Natural killer cell (primary cell): ENCODE measurements at regions of chr18 and their contacts with region 1.

Region 1: DNA sequence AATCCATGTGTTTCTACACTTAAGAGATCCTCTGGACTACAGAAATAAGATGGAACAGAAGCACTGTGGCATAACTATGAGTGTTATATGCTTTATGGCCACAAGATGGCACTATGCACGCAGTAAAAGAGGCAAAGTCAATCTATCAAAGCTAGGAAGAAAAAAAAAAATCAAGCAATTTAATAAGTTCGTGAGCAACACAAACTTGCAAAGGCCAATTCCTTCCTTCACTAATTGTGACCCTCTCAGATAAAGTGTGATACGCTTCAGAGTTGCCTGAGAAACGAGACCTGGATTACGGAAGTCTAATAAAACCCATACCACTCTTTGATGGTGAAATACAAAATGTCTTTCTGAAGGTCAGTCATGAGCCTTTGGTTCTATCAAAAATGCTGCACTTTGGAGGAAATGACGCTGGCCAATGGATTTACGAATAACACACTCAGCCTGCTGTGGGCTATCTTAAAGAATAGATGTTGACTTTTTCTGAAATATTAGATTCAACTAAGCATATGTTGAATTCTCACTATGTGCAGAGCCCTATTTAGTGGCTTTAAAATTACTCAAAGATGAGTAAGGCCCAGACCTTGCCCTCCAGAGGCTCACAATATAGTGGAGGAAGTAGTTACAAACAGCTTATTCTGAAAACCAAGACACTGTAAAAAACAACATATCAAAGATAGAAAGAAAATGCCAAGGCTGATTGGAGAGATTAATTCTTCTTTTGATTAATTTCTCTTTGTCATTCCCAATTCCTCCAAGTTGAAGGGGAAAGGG is 35.5 kb upstream of the TTR start:
- DNase-seq: peak in 1 of 2 donors; percentile 77
- ATAC-seq: peak; percentile 77 to 89 (median 86)
- H3K4me3 ChIP-seq: no peak overlapping the region
- H3K4me3 Mint-ChIP-seq: no peak overlapping the region
- H3K27ac ChIP-seq: no peak overlapping the region
- H3K27ac Mint-ChIP-seq: no peak overlapping the region
- H3K4me1 ChIP-seq: no peaks in the 10 kb centered on the region
- H3K4me1 Mint-ChIP-seq: peaks cover 0 to 6% of the 10 kb centered on the region in 2 donors
- H3K27me3 ChIP-seq: no peaks in the 10 kb centered on the region
- H3K27me3 Mint-ChIP-seq: peaks cover 18 to 37% of the 10 kb centered on the region in 2 donors
- CTCF ChIP-seq: peak; percentile 96

Region 2: DNA sequence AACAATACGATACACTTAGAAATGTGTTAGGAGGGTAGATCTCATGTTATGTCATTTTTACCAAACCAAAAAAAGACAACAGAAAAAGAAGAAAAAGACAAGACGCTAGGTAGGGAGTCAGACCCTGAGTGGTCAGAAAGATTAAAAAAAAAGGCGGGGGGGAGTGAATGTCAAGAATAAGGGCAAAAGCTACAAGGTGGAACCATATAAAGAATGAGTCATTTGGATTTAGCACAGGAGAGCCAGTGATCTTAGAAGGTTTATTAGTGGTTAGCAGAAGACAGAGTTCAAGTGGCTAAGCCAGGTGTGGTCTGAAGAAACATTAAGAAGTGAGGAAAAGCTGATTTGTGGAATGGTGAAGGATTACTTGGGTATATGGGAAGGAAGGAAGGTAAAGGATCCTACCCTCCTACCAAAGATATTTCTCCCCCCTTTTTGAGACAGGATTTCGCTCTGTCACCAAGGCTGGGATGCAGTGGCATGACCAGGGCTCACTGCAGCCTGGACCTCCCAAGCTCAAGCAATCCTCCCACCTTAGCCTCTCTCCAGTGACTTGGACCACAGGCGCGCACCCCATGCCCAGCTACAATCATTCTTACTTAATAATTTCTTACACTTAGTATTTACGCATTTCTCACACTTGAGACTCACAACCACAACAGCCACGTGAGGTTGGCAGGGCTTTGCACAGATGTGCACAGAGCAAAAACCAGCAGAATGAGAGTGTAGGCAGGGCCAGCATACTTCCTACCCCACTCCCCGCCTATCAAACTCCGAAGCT is 456.5 kb before region 1 on chr18:
- intact Hi-C with region 1: no loop called
- DNase-seq: no peak
- ATAC-seq: no peak
- H3K4me3 ChIP-seq: no peak overlapping the region
- H3K4me3 Mint-ChIP-seq: no peak overlapping the region
- H3K27ac ChIP-seq: no peak overlapping the region
- H3K27ac Mint-ChIP-seq: no peak overlapping the region
- H3K4me1 ChIP-seq: no peaks in the 10 kb centered on the region
- H3K4me1 Mint-ChIP-seq: no peaks in the 10 kb centered on the region
- H3K27me3 ChIP-seq: peaks cover 8% of the 10 kb centered on the region
- H3K27me3 Mint-ChIP-seq: peaks cover 18 to 34% of the 10 kb centered on the region in 2 donors
- CTCF ChIP-seq: no peak

Region 3: GRCh38 chr18:31722369-31722957 is 166.3 kb after region 1 on chr18:
- intact Hi-C with region 1: loop called (anchors 1 kb)
- DNase-seq: peak; percentile 73 to 83
- ATAC-seq: peak; percentile 87 to 100 (median 98)
- H3K4me3 ChIP-seq: no peak overlapping the region
- H3K4me3 Mint-ChIP-seq: no peak overlapping the region
- H3K27ac ChIP-seq: no peak overlapping the region
- H3K27ac Mint-ChIP-seq: no peak overlapping the region
- H3K4me1 ChIP-seq: peaks cover 8% of the 10 kb centered on the region
- H3K4me1 Mint-ChIP-seq: peaks cover 4 to 7% of the 10 kb centered on the region in 2 donors
- H3K27me3 ChIP-seq: peaks cover 8% of the 10 kb centered on the region
- H3K27me3 Mint-ChIP-seq: peaks cover 17% of the 10 kb centered on the region in 2 donors
- CTCF ChIP-seq: peak; percentile 94

Region 4: GRCh38 chr18:31819106-31819924 is 263.2 kb after region 1 on chr18:
- intact Hi-C with region 1: loop called (anchors 1 kb)
- DNase-seq: peak in 1 of 2 donors; percentile 53
- ATAC-seq: peak; percentile 56 to 74 (median 59)
- H3K4me3 ChIP-seq: no peak overlapping the region
- H3K4me3 Mint-ChIP-seq: no peak overlapping the region
- H3K27ac ChIP-seq: no peak overlapping the region
- H3K27ac Mint-ChIP-seq: no peak overlapping the region
- H3K4me1 ChIP-seq: no peaks in the 10 kb centered on the region
- H3K4me1 Mint-ChIP-seq: peaks cover 0 to 5% of the 10 kb centered on the region in 2 donors
- H3K27me3 ChIP-seq: no peaks in the 10 kb centered on the region
- H3K27me3 Mint-ChIP-seq: peaks cover 0 to 2% of the 10 kb centered on the region in 2 donors
- CTCF ChIP-seq: peak; percentile 85

Region 5: GRCh38 chr18:31977270-31977872 is 421.2 kb after region 1 on chr18:
- intact Hi-C with region 1: loop called (anchors 5 kb)
- DNase-seq: peak in 1 of 2 donors; percentile 68
- ATAC-seq: peak; percentile 48 to 52 (median 49)
- H3K4me3 ChIP-seq: no peak overlapping the region
- H3K4me3 Mint-ChIP-seq: no peak overlapping the region
- H3K27ac ChIP-seq: no peak overlapping the region
- H3K27ac Mint-ChIP-seq: no peak overlapping the region
- H3K4me1 ChIP-seq: no peaks in the 10 kb centered on the region
- H3K4me1 Mint-ChIP-seq: no peaks in the 10 kb centered on the region
- H3K27me3 ChIP-seq: no peaks in the 10 kb centered on the region
- H3K27me3 Mint-ChIP-seq: no peaks in the 10 kb centered on the region
- CTCF ChIP-seq: peak; percentile 57